T-cell (primary cell): ENCODE measurements at regions of chr5 and their contacts with region 1.

Region 1: GRCh38 chr5:157219491-157220271 is 39.0 kb downstream of the ITK start:
- DNase-seq: no peak
- ATAC-seq: no peak
- H3K4me3 ChIP-seq: no peak overlapping the region
- H3K4me3 Mint-ChIP-seq: peak overlapping the region; percentile 26 to 60 (median 29)
- H3K27ac ChIP-seq: peak overlapping the region; percentile 71
- H3K27ac Mint-ChIP-seq: peak overlapping the region; percentile 94
- H3K4me1 ChIP-seq: peaks cover 88 to 95% of the 10 kb centered on the region in 2 experiments
- H3K4me1 Mint-ChIP-seq: peaks cover 88 to 94% (median 92%) of the 10 kb centered on the region in 3 donors
- H3K27me3 ChIP-seq: no peaks in the 10 kb centered on the region
- H3K27me3 Mint-ChIP-seq: no peaks in the 10 kb centered on the region

Region 2: DNA sequence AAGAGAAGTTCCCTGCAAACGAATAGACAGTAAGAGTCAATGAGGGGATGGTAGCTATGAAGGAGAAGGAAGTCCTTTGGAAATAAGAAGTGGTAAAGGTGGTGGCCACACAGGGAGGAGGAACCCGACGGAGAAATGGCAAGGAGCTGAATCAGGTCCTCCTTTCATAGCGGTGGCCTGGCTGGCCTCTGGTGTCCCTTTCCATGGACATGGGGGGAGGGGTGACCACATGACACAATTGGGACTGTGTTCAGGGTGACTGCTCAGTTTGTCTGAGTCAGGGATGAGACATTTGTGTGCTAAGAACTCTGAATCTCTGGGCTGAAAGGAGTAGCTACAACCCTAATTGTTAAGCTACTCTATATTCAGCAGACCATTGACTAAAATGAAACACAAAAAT is 228.0 kb before region 1 on chr5:
- CTCF ChIA-PET with region 1: no interaction called
- POLR2A ChIA-PET with region 1: no interaction called
- DNase-seq: no peak
- ATAC-seq: no peak
- H3K4me3 ChIP-seq: no peak overlapping the region
- H3K4me3 Mint-ChIP-seq: no peak overlapping the region
- H3K27ac ChIP-seq: no peak overlapping the region
- H3K27ac Mint-ChIP-seq: no peak overlapping the region
- H3K4me1 ChIP-seq: no peaks in the 10 kb centered on the region
- H3K4me1 Mint-ChIP-seq: no peaks in the 10 kb centered on the region
- H3K27me3 ChIP-seq: no peaks in the 10 kb centered on the region
- H3K27me3 Mint-ChIP-seq: peaks cover 0 to 4% of the 10 kb centered on the region in 2 donors

Region 3: DNA sequence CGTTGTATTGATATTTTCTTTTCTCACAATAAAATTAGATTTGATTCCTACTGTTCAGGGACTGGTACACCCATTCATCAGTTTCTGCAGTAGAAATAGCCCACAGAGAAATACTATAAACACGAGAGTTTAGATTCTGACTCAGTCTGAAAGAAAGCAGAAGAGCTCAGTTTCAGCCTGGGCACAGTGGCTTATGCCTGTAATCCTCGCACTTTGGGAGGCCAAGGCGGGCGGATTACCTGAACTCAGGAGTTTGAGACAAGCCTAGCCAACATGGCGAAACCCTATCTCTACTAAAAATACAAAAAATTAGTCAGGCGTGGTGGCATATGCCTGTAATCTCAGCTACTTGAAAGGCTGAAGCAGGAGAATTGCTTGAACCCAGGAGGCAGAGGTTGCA is 30.5 kb before region 1 on chr5:
- CTCF ChIA-PET with region 1: interaction called in 1 of 2 experiments, 3 read pairs
- POLR2A ChIA-PET with region 1: interaction called, 4 to 10 read pairs
- DNase-seq: no peak
- ATAC-seq: peak in 1 of 4 experiments; percentile 8
- H3K4me3 ChIP-seq: peak overlapping the region in 1 of 2 donors; percentile 40
- H3K4me3 Mint-ChIP-seq: peak overlapping the region; percentile 81 to 100 (median 99)
- H3K27ac ChIP-seq: peak overlapping the region; percentile 88
- H3K27ac Mint-ChIP-seq: peak overlapping the region; percentile 94 to 96
- H3K4me1 ChIP-seq: peaks cover 74 to 80% of the 10 kb centered on the region in 2 experiments
- H3K4me1 Mint-ChIP-seq: peaks cover 86 to 98% (median 89%) of the 10 kb centered on the region in 3 donors
- H3K27me3 ChIP-seq: no peaks in the 10 kb centered on the region
- H3K27me3 Mint-ChIP-seq: no peaks in the 10 kb centered on the region

Region 4: GRCh38 chr5:157366741-157367674 is 147.3 kb after region 1 on chr5:
- CTCF ChIA-PET with region 1: no interaction called
- POLR2A ChIA-PET with region 1: no interaction called
- DNase-seq: no peak
- ATAC-seq: no peak
- H3K4me3 ChIP-seq: no peak overlapping the region
- H3K4me3 Mint-ChIP-seq: no peak overlapping the region
- H3K27ac ChIP-seq: no peak overlapping the region
- H3K27ac Mint-ChIP-seq: peak overlapping the region in 1 of 2 donors; percentile 50
- H3K4me1 ChIP-seq: no peaks in the 10 kb centered on the region
- H3K4me1 Mint-ChIP-seq: peaks cover 2 to 7% (median 6%) of the 10 kb centered on the region in 3 donors
- H3K27me3 ChIP-seq: no peaks in the 10 kb centered on the region
- H3K27me3 Mint-ChIP-seq: no peaks in the 10 kb centered on the region